Activated naive CD4-positive, alpha-beta T cell treated with anti-CD3 and anti-CD28 coated beads for 36 hours (primary cell): ENCODE measurements at regions of chr11 and their contacts with region 1.

Region 1: DNA sequence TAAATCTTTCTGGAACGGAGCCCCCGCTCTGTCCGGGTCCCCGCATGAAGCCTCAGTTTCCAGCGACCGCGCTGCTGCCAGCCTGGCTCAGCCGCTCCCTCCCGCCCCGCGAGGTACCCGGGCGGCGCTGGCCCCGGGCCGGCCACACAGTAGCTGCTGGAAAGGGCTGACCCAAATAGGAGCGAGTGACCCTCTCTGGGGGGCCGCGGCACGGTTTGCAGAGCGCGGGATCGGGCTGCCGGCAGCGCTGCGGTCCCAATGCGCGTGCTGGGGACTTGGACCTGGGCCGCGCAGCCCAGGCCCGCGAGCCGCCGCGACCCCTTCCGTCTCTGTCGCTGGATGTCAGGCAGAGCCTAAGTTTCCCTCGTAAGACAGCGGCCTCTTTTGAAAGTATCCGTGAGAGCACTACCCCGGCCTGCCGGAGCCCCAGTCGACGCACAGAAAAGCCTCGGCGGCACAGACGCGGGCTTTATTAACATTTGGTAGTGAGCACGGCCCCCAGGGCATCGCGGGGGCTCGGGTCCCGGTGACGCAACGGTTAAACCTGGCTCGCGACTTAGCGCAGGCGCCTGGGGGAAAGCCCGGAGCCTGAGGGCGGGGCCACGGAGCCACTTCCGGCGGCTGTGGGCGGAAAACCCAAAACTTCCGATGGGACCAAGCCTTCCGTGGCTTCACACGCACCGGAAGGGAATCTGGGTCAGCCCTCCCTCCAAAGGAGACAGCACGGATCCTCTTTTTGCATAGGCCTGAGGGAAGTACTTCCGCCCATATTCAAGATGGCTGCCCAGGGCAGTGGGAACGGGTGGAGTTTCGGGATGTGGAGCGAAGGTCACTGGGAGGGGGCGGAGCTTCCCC is 14.9 kb downstream of the BAD start:
- DNase-seq: peak; percentile 98
- H3K4me3 Mint-ChIP-seq: peak overlapping the region; percentile 90
- H3K27ac Mint-ChIP-seq: peak overlapping the region; percentile 88
- H3K4me1 Mint-ChIP-seq: peaks cover 15% of the 10 kb centered on the region
- H3K27me3 Mint-ChIP-seq: no peaks in the 10 kb centered on the region

Region 2: DNA sequence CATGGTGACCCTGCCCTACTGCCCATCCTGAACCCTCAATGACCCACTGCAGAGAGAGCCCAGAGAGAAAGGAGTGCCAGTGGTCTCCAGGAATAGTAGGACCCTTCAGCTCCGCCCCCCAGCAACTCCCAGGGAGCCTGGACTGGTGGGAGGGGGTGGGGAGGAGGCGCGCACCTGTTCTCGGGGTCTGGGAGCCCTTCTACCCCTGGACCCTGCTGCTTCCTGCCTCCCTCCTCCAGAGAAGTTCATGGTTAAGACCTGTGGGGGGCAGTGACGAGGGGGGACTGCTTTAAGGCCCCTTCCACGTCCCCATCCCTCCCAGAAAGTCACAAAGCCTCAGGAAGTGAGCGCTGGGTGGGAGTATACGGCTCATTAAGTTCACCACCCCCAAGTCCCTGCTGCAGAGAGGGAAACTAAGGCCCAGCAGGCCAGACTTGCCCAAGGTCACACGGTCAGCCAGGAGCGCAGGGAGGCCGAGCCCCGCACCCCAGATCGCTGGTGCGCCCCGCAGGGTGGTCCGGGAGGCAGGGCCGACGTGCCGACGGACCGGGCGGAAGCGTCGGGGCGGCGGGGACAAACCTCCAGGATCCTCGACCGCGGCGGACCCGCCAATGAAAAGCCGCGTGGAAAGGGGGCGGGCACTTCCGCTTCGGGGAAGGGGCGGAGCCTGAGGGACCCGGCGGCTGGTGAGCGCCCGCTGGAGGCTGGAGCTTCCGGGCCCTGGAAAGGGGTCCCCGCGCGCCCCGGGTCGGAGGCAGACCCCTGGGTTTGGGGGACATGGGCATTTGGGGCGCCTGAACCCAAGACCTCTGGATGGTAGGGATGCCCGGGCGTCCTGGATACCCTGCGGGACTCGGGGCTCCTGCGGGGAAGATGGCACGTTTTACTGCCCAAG is 43.7 kb before region 1 on chr11 and contains the starts of genes NUDT22 and TRPT1:
- CTCF ChIA-PET with region 1: no interaction called
- intact Hi-C with region 1: loop called (anchors 1 kb)
- DNase-seq: peak; percentile 94
- H3K4me3 Mint-ChIP-seq: peak within 1 kb of the TSS; percentile 87
- H3K27ac Mint-ChIP-seq: peak within 1 kb of the TSS; percentile 90
- H3K4me1 Mint-ChIP-seq: peaks cover 34% of the 10 kb centered on the region
- H3K27me3 Mint-ChIP-seq: no peaks in the 10 kb centered on the region
- total RNA-seq, gene NUDT22: 51.4 to 51.9 TPM
- total RNA-seq, gene TRPT1: 18.2 to 18.3 TPM

Region 3: GRCh38 chr11:64240394-64241174 is 29.0 kb before region 1 on chr11 and contains the start of gene FKBP2:
- CTCF ChIA-PET with region 1: interaction called, 4 read pairs
- intact Hi-C with region 1: loop called (anchors 1 kb)
- DNase-seq: peak; percentile 97
- H3K4me3 Mint-ChIP-seq: peak within 1 kb of the TSS; percentile 92
- H3K27ac Mint-ChIP-seq: peak within 1 kb of the TSS; percentile 98
- H3K4me1 Mint-ChIP-seq: peaks cover 35% of the 10 kb centered on the region
- H3K27me3 Mint-ChIP-seq: no peaks in the 10 kb centered on the region
- total RNA-seq, gene FKBP2: 17.2 to 20.0 TPM

Region 4: DNA sequence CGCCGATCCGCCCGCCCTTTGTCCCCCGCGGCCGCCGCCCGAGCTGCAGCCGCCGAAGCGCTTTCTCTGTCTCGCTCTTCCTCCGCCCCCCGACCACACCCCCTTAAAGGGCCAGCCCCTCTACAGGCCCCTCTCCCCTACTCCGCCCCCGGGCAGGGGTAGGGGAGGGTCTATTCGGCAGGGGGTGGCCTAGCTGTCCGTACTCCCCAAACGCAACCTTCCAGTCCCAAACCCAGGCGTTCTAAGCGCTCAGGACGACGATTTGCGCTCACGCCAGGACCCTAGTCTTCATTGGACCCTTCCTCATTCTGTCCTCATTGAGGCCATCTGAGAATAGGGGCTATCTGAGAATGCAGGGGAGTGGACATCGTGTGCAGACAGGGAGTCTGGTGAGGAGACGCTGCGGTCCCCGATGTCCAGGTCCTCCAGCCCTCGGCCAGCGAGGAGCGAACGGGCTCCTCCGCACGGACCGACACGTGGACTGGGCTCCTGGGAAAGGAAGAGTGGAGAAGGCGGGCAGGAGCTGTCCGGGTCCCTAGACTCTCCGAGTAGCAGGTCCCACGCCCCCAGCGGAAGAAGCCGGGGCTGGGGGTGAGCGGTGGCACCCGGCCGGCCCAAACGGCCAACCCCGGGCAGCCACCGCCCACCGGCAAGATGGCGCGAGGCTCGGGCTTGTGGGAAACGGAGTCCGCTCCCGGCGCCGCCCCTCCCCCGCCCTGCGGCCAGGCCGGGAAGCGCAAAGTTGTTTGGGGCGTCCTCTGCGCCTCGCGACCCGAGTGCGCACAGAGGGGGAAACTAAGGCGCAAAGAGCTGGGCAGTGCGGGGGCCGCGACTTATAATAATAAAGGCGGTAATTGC is 22.5 kb before region 1 on chr11 and contains the start of gene PPP1R14B:
- CTCF ChIA-PET with region 1: interaction called, 20 read pairs
- intact Hi-C with region 1: loop called (anchors 1 kb)
- DNase-seq: peak; percentile 80
- H3K4me3 Mint-ChIP-seq: peak within 1 kb of the TSS; percentile 95
- H3K27ac Mint-ChIP-seq: peak within 1 kb of the TSS; percentile 91
- H3K4me1 Mint-ChIP-seq: peaks cover 29% of the 10 kb centered on the region
- H3K27me3 Mint-ChIP-seq: no peaks in the 10 kb centered on the region
- total RNA-seq, gene PPP1R14B: 216 to 227 TPM

Region 5: DNA sequence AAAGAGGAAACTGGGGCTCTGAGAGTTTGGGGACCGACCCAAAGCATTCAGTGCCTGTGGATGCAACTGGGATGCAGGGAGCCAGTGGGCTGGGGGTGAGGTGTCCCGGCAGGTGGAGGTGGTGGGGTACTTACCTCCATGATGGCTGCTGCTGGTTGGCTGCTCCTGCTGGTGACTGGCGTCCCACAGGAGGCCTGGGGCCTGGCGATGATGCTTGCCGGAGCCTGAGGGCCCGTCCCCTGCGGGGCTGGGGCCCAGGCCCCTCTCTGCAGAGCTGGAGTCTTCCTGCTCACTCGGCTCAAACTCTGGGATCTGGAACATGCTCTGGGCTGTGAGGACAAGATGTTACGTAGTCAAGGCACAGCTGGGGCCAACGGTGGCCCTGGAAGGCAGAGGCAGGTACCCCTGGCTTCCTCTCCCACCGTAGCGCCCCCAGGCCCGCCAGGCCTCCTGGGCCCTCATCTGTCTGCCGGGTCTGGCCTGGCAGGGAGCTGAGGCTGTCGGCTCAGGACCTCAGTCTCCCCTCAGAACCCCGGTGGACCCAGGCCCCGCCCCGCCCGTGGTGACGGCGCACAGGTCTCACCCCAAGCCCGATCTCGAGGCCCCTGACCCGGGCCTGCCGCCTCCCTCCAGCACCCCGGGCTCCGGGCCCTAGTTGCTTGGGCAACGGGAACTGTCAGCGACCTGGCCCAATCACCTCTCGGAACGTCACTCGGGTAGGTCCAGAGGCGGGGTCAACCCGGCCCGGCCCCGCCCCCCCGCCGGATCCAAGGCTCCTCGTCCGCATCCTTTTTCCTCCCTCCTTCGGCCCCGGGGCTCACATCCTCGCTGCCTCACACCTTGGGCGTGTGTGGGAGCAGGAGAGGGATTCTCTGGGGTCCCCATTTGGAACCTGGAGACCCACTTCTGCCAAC is 14.7 kb after region 1 on chr11 and contains the start of gene BAD:
- CTCF ChIA-PET with region 1: interaction called, 3 read pairs
- intact Hi-C with region 1: loop called (anchors 1 kb)
- DNase-seq: peak; percentile 95
- H3K4me3 Mint-ChIP-seq: peak within 1 kb of the TSS; percentile 82
- H3K27ac Mint-ChIP-seq: peak within 1 kb of the TSS; percentile 90
- H3K4me1 Mint-ChIP-seq: peaks cover 17% of the 10 kb centered on the region
- H3K27me3 Mint-ChIP-seq: no peaks in the 10 kb centered on the region
- total RNA-seq, gene BAD: 12.8 to 14.3 TPM

Region 6: DNA sequence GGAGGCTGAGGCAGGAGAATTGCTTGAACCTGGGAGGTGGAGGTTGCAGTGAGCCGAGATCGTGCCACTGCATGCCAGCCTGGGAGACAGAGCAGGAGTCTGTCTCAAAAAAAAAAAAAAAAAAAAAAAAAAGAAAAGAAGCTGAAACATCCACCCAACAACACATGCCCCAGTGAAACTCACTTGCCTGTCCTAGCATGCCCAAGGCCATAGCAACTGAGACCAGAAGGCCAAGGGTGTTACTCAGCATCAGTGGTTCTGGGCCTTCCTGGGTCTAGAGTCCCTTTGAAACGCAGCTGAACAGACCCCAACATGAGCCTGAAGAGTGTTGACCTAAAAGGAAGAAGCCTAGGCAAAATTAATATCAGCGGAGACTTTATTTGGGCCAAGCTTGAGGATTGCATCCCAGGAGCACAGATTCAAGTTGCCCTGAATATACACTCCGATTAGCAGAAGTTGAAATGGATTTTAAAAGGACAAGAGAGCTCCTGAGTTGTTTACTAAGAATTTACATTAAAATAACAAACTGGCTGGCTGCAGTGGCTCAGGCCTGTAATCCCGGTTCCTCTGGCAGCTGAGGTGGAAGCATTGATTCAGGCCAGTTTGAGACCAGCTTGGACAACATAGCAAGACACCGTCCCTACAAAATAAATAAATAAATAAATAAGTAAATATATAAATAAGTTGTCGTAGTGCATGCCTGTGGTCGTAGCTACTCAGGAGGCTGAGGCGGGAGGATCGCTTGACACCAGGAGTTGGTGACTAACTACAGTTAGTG is 55.3 kb after region 1 on chr11:
- CTCF ChIA-PET with region 1: no interaction called
- intact Hi-C with region 1: no loop called
- DNase-seq: no peak
- H3K4me3 Mint-ChIP-seq: no peak overlapping the region
- H3K27ac Mint-ChIP-seq: no peak overlapping the region
- H3K4me1 Mint-ChIP-seq: peaks cover 9% of the 10 kb centered on the region
- H3K27me3 Mint-ChIP-seq: no peaks in the 10 kb centered on the region

Region 7: DNA sequence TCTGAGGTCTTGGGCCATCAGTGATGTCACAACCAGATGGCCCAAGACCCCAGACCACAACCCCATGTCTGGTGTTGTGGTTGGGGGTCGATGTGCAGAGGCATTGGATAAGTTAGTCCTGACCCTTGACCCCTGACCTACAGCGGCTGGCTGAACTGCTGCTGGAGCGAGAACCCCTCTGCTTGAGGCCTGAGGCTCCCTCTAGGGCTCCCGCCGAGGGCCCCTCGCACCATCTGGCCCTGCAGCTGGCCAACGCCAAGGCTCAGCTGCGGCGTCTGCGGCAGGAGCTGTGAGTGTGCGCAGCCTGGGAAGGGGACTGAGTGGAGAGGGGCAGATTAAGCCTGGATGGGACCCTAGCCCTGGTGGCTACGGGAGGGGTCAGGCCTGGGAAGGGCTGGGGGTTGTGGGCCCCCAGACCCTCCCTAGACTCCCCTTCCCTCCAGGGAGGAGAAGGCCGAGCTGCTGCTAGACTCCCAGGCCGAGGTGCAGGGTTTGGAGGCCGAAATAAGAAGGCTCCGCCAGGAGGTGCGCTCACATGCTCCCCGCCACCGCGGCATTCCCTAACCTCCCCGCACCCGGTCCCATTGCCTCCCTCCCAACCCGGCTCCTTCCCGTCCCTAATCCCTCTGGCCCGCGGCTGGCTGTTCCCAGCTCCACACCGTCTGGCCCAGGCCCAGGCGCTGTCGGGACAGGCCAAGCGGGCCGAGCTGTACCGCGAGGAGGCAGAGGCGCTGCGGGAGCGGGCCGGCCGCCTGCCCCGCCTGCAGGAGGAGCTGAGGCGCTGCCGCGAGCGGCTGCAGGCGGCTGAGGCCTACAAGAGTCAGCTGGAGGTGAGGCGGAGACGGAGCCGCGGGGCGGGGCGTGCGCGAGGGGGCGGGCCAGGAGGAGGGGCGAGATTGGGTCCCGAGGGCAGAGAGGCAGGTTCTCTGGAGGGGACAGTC is 72.5 kb after region 1 on chr11:
- CTCF ChIA-PET with region 1: no interaction called
- intact Hi-C with region 1: loop called (anchors 2 kb)
- DNase-seq: peak; percentile 95
- H3K4me3 Mint-ChIP-seq: peak overlapping the region; percentile 18
- H3K27ac Mint-ChIP-seq: no peak overlapping the region
- H3K4me1 Mint-ChIP-seq: peaks cover 34% of the 10 kb centered on the region
- H3K27me3 Mint-ChIP-seq: no peaks in the 10 kb centered on the region

Region 8: GRCh38 chr11:64419818-64420485 is 150.3 kb after region 1 on chr11:
- CTCF ChIA-PET with region 1: no interaction called
- intact Hi-C with region 1: no loop called
- DNase-seq: no peak
- H3K4me3 Mint-ChIP-seq: no peak overlapping the region
- H3K27ac Mint-ChIP-seq: no peak overlapping the region
- H3K4me1 Mint-ChIP-seq: peaks cover 3% of the 10 kb centered on the region
- H3K27me3 Mint-ChIP-seq: no peaks in the 10 kb centered on the region